Activated T-helper 1 cell treated with anti-CD3 and anti-CD28 coated beads, Interleukin-12 subunit alpha, Interleukin-12 subunit beta, Interleukin-2, Interleukin-4 antibody, amounts not matched to agents 30 ng/mL and 10 ng/mL and 1 ng/mL, durations not matched to agents 14 hours and 24 hours and 36 hours (primary cell): ENCODE measurements at regions of chrX and their contacts with region 1.

Region 1: DNA sequence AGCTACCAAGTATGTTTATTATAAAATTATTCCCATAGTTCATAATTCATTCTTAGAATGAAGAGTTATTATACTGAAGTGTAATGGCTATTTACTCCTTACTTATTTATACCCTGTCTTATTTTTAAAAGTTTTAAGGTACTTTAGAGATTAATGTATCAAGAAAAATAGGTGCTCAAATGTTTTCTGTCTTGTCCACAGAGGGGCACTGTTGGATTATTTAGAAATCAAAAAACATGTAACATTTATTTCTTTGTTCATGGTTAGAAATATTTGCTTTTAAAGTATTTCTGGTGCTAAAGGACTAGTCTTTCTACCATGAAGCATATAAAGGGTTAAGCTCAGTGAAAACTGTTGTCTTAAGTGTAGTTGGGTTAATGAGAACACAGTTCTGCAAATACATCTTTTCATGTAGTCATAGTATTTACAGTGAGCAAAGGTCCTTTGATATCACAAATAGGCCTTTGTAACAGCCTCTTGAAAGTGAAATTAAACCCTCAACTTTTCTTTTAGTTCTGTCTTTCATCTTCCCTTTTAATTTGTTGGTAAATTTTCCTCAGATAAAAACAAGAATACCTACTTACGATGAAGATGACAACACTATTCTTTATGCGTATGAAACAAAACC is 7.7 kb downstream of the SCML1 start:
- DNase-seq: no peak
- H3K4me3 Mint-ChIP-seq: no peak overlapping the region
- H3K27ac Mint-ChIP-seq: no peak overlapping the region
- H3K4me1 Mint-ChIP-seq: no peaks in the 10 kb centered on the region
- H3K27me3 Mint-ChIP-seq: peaks cover 29% of the 10 kb centered on the region

Region 2: DNA sequence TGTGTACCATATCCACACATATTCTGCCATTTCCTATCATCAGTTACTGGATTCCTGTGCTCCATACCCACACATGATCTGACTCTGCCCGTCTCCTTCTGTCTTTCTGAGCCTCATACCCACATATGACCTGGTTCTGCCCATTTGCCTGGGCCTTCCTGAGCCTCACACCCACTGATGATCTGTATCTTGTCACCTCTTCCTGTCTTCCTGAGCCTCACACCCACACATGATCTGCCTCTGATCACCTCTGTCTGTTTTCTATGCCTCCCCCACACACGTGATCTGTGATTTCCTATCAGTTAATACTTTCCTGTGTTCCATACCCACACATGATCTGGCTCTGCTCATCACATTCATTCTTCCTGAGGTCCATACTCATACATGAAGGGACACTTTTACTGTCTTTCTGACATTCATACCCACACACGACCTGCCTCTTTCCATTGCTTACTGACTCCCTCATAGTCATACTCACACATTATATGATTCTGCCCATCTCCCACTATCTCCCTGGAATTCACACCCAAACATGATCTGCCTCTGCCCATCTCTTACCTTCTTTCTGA is 24.8 kb after region 1 on chrX:
- intact Hi-C with region 1: loop called (anchors 2 kb)
- DNase-seq: no peak
- H3K4me3 Mint-ChIP-seq: no peak overlapping the region
- H3K27ac Mint-ChIP-seq: no peak overlapping the region
- H3K4me1 Mint-ChIP-seq: no peaks in the 10 kb centered on the region
- H3K27me3 Mint-ChIP-seq: no peaks in the 10 kb centered on the region